HEK293 (cell line): ENCODE measurements at regions of chr2 and their contacts with region 1.

Region 1: DNA sequence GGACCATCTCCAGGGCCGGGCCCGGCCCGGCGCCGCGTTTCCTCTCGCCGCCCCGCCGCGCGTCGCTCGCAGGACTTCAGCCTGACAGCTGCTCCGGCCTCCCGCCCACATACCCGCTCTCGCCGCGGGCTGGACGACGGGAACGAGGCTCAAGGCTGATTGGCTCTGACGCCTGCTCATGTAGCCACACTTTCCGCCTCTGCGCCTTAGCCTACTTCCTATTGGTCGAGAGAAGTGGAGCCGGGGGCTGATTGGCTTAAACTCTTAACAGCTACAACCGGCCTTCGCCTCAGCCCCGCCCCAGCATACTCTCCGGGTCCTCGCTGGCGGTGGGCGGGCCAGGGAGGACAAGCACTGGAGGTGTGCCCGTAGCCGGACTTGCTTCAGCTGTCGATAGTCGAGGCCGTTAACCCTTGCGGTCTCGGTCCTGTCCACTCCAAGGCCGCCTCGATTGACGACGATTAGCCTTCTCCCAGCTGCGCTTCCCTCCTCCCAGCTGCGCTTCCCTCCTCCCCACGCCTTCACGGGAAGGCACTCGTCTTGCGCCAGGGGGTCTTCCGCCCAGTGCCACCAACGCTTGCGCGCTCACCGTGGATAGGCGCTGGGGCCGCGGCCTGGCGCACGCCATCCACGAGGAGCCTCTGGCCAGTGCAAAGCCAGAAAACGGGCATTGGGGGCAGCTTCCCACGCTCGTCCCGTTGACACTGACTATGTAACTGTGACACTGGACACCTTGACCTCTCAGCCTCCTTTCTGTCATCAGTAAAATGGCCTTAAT is at the start of gene PRADC1:
- H3K4me3 ChIP-seq: peak within 1 kb of the TSS; percentile 87
- H3K27ac ChIP-seq: peak within 1 kb of the TSS; percentile 97
- H3K4me1 ChIP-seq: peaks cover 12% of the 10 kb centered on the region; the same call in 1 of the 2 replicates
- CTCF ChIP-seq: peak; percentile 47

Region 2: DNA sequence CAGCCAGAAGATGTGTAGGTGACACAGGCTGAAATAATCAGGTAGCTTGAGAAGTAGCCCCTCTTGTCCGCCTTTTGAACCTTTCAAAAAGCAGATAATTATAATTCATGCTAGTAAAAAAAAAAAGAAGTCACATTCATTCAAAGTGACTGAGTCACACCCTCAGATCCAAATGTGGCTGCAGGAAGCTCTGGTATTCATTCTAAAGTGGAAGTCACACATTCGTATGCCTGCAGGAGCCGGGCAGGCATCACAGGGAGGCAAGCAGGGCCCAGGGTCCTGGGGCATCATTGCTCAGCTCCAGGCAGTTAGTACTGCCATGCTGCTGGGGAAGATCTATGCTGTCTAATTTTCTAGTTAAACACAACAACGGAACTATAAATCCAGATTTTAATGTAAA is 98.9 kb before region 1 on chr2:
- CTCF ChIA-PET with region 1: no interaction called
- POLR2A ChIA-PET with region 1: no interaction called
- H3K4me3 ChIP-seq: no peak overlapping the region
- H3K27ac ChIP-seq: no peak overlapping the region
- H3K4me1 ChIP-seq: no peaks in the 10 kb centered on the region
- CTCF ChIP-seq: no peak

Region 3: DNA sequence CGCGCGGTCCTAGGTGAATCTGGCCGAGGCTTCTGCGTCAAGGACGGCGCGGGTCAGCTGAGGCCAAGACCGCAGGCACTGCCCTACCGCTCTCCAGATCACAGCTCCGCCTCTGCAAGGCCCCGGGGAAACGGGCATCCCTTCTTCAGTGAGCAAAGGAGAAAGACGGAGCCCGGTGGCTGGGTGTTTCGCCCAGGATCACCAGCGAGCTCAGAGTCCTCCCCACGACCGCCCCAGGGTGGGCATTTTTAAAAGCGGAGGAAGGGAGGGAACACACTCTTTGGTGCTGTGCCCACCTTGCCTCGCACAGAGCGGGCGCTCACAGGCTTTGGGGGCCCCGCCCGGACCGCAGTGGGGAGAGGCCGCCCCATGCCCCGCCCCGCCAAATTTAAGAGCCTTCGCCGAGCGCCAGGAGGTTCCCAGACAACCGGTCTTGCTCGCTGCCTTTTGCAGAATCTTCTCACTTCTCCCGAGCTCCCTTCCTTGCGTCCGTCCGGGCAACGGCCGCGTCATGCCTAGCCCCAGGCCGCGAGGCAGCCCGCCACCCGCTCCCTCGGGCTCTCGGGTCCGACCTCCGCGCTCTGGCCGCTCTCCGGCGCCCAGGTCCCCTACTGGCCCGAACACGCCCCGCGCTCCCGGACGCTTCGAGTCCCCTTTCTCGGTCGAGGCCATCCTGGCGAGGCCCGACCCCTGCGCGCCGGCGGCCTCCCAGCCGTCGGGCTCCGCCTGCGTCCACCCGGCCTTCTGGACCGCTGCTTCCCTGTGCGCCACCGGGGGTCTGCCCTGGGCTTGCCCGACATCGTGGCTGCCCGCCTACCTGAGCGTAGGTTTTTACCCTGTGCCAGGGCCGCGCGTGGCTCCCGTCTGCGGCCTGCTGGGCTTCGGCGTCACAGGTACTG is 30.9 kb before region 1 on chr2 and contains the start of gene NOTO:
- CTCF ChIA-PET with region 1: no interaction called
- POLR2A ChIA-PET with region 1: no interaction called
- H3K4me3 ChIP-seq: no peak within 1 kb of the TSS
- H3K27ac ChIP-seq: no peak within 1 kb of the TSS
- H3K4me1 ChIP-seq: no peaks in the 10 kb centered on the region
- CTCF ChIP-seq: no peak

Region 4: GRCh38 chr2:73212448-73213176 is 20.7 kb before region 1 on chr2:
- CTCF ChIA-PET with region 1: interaction called, 11 read pairs
- POLR2A ChIA-PET with region 1: interaction called, 32 read pairs
- H3K4me3 ChIP-seq: no peak overlapping the region
- H3K27ac ChIP-seq: no peak overlapping the region
- H3K4me1 ChIP-seq: no peaks in the 10 kb centered on the region
- CTCF ChIP-seq: peak; percentile 67

Region 5: GRCh38 chr2:73218298-73218697 is 15.0 kb before region 1 on chr2:
- CTCF ChIA-PET with region 1: interaction called, 11 read pairs
- POLR2A ChIA-PET with region 1: interaction called, 32 read pairs
- H3K4me3 ChIP-seq: no peak overlapping the region
- H3K27ac ChIP-seq: no peak overlapping the region
- H3K4me1 ChIP-seq: no peaks in the 10 kb centered on the region
- CTCF ChIP-seq: no peak

Region 6: GRCh38 chr2:73243884-73244570 is 10.7 kb after region 1 on chr2:
- CTCF ChIA-PET with region 1: interaction called, 6 read pairs
- POLR2A ChIA-PET with region 1: interaction called, 33 read pairs
- H3K4me3 ChIP-seq: no peak overlapping the region
- H3K27ac ChIP-seq: no peak overlapping the region
- H3K4me1 ChIP-seq: peaks cover 2% of the 10 kb centered on the region; the same call in 1 of the 2 replicates
- CTCF ChIP-seq: no peak

Region 7: GRCh38 chr2:73260034-73260984 is 27.0 kb after region 1 on chr2:
- CTCF ChIA-PET with region 1: no interaction called
- POLR2A ChIA-PET with region 1: interaction called, 18 read pairs
- H3K4me3 ChIP-seq: no peak overlapping the region
- H3K27ac ChIP-seq: no peak overlapping the region
- H3K4me1 ChIP-seq: no peaks in the 10 kb centered on the region
- CTCF ChIP-seq: peak; percentile 71

Region 8: GRCh38 chr2:73290049-73290839 is 56.9 kb after region 1 on chr2:
- CTCF ChIA-PET with region 1: interaction called, 6 read pairs
- POLR2A ChIA-PET with region 1: interaction called, 12 read pairs
- H3K4me3 ChIP-seq: no peak overlapping the region
- H3K27ac ChIP-seq: no peak overlapping the region
- H3K4me1 ChIP-seq: peaks cover 4% of the 10 kb centered on the region; the same call in 1 of the 2 replicates
- CTCF ChIP-seq: peak; percentile 49; the same call in 1 of the 2 replicates

Region 9: DNA sequence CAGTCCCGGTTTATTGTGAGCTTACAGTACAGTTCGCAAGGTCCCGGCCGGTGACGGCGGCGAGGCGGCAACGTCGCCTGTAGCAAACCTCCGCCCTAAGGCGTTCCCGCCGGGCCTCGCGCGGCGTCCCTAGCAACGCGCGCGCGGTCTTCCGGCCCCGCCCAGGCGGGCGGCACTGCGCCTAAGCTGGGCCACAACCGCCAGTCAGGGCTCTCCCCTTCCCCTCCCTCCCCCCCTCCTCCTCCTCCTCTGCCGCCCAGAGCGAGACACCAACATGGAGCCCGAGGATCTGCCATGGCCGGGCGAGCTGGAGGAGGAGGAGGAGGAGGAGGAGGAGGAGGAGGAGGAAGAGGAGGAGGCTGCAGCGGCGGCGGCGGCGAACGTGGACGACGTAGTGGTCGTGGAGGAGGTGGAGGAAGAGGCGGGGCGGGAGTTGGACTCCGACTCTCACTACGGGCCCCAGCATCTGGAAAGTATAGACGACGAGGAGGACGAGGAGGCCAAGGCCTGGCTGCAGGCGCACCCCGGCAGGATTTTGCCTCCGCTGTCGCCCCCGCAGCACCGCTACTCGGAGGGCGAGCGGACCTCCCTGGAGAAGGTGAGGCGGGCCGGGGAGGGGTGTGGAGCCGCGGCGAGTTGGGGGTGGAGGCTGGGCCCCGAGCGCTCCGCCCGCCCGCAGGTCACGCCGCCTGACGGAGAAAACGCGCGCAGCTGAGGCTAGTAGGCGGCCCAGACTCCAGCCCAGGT is 152.4 kb after region 1 on chr2 and contains the start of gene ALMS1:
- CTCF ChIA-PET with region 1: no interaction called
- POLR2A ChIA-PET with region 1: interaction called, 13 read pairs
- H3K4me3 ChIP-seq: peak within 1 kb of the TSS; percentile 96
- H3K27ac ChIP-seq: peak within 1 kb of the TSS; percentile 89
- H3K4me1 ChIP-seq: no peaks in the 10 kb centered on the region; the same call in 1 of the 2 replicates
- CTCF ChIP-seq: peak; percentile 70; the same call in 1 of the 2 replicates

Region 10: DNA sequence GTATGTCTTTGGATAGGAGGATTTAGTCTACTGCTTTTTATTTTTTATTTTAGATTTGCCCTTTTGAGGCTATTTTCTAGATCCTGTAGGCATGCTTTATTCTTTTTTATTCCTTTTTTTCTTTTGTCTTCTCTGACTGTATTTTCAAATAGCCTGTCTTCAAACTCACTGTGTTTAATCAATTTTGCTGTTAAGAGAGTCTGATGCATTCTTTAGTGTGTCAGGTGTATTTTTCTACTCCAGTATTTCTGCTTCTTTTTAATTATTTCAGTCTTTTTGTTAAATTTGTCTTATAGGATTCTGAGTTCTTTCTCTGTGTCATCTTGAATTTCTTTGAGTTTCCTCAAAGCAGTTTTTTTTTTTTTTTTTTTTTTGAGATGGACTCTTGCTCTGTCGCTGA is 295.3 kb after region 1 on chr2:
- CTCF ChIA-PET with region 1: no interaction called
- POLR2A ChIA-PET with region 1: no interaction called
- H3K4me3 ChIP-seq: no peak overlapping the region
- H3K27ac ChIP-seq: no peak overlapping the region
- H3K4me1 ChIP-seq: no peaks in the 10 kb centered on the region
- CTCF ChIP-seq: no peak